Activated B cell treated with CpG ODN at 0.5 μM for 24 hours (primary cell): ENCODE measurements at regions of chr17 and their contacts with region 1.

Region 1: DNA sequence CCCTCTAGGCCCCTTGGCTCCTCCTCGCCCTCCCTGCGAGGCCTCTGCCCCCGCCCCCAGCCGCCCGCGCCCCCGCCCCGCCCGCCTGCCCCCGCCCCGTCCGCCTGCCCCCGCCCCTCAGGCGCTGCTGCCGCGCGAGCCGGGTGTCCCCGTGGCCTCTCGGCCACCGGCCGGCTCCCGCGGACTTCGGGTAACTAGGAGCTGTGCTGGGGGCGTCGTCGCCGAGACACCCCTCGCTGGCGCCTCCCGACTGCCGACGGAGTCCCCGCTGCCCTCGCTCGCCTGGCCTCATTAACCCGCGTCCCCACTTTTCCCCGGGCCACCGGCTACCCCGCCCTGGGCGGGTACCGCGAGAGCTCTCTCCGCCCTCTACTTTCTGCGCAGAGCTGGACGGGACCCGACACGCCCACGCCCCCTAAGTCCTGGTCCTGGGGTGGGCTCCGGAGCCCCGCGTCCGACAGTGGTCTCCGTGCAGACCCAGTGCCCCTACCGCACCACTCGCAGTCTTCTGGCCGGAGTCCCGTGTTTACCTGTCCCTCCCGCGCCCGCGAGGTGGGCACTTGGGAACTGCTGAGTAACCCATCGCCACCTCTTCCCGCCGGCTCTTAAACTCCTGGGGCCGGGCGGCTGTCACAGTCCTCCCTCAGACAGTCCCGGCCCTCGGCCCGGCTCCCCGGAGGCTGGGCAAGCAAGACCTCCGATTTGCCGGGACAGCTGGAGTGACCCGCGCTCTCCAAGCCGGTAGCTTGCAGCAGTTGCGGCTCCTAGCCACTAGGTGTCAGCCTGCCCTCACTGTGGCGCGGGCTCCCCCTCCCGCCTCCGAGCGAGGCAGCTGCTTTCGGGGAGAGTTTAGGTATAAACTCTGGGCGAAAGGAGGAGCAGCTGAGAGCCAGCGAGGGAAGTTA is at the start of gene TLCD1:
- DNase-seq: peak; percentile 87
- ATAC-seq: peak; percentile 40
- H3K4me3 Mint-ChIP-seq: peak within 1 kb of the TSS; percentile 95
- H3K27ac Mint-ChIP-seq: peak within 1 kb of the TSS; percentile 99
- H3K4me1 Mint-ChIP-seq: peaks cover 70% of the 10 kb centered on the region
- H3K27me3 Mint-ChIP-seq: no peaks in the 10 kb centered on the region
- CTCF ChIP-seq: peak; percentile 78
- total RNA-seq, gene TLCD1: 40.7 and 41.0 TPM in 2 replicates

Region 2: GRCh38 chr17:28405632-28406472 is 320.6 kb before region 1 on chr17 and contains the start of gene SLC46A1:
- CTCF ChIA-PET with region 1: no interaction called
- POLR2A ChIA-PET with region 1: no interaction called
- intact Hi-C with region 1: no loop called
- DNase-seq: peak; percentile 52
- ATAC-seq: peak; percentile 88
- H3K4me3 Mint-ChIP-seq: peak within 1 kb of the TSS; percentile 83
- H3K27ac Mint-ChIP-seq: peak within 1 kb of the TSS; percentile 41
- H3K4me1 Mint-ChIP-seq: peaks cover 8% of the 10 kb centered on the region
- H3K27me3 Mint-ChIP-seq: peaks cover 4% of the 10 kb centered on the region
- CTCF ChIP-seq: no peak
- total RNA-seq, gene SLC46A1: 1.5 and 2.1 TPM in 2 replicates

Region 3: DNA sequence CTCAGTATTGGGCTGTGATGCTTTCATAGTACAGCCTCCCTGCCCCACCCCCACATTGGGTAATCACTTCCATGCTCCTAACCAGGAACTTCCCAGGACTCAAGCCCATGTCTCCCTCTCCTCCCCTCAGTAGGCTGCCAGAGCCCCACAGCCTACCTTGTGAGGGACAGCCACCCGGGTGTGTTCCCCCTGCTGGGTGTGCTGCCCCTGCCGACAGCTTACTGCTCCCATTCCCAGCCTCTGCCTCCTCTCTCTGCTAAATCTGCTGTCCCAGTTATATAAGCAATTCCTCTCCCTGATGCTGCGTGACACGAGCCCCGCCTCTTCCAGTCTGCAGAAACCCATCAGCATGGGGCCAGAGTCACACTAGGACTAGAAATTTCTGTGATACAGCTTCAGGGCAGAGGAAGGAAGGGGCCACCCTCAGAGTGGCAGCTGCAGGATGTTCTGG is 112.5 kb before region 1 on chr17 and contains the start of gene RSKR:
- CTCF ChIA-PET with region 1: no interaction called
- POLR2A ChIA-PET with region 1: no interaction called
- intact Hi-C with region 1: no loop called
- DNase-seq: no peak
- ATAC-seq: no peak
- H3K4me3 Mint-ChIP-seq: no peak within 1 kb of the TSS
- H3K27ac Mint-ChIP-seq: peak within 1 kb of the TSS; percentile 56
- H3K4me1 Mint-ChIP-seq: peaks cover 38% of the 10 kb centered on the region
- H3K27me3 Mint-ChIP-seq: no peaks in the 10 kb centered on the region
- CTCF ChIP-seq: no peak
- total RNA-seq, gene RSKR: 21.0 and 26.8 TPM in 2 replicates

Region 4: GRCh38 chr17:28644985-28645939 is 81.2 kb before region 1 on chr17 and contains the start of gene BLTP2:
- CTCF ChIA-PET with region 1: interaction called, 12 read pairs
- POLR2A ChIA-PET with region 1: interaction called, 50 read pairs
- intact Hi-C with region 1: no loop called
- DNase-seq: peak; percentile 91
- ATAC-seq: peak; percentile 97
- H3K4me3 Mint-ChIP-seq: peak within 1 kb of the TSS; percentile 97
- H3K27ac Mint-ChIP-seq: peak within 1 kb of the TSS; percentile 91
- H3K4me1 Mint-ChIP-seq: peaks cover 40% of the 10 kb centered on the region
- H3K27me3 Mint-ChIP-seq: no peaks in the 10 kb centered on the region
- CTCF ChIP-seq: no peak
- total RNA-seq, gene BLTP2: 162 and 182 TPM in 2 replicates

Region 5: DNA sequence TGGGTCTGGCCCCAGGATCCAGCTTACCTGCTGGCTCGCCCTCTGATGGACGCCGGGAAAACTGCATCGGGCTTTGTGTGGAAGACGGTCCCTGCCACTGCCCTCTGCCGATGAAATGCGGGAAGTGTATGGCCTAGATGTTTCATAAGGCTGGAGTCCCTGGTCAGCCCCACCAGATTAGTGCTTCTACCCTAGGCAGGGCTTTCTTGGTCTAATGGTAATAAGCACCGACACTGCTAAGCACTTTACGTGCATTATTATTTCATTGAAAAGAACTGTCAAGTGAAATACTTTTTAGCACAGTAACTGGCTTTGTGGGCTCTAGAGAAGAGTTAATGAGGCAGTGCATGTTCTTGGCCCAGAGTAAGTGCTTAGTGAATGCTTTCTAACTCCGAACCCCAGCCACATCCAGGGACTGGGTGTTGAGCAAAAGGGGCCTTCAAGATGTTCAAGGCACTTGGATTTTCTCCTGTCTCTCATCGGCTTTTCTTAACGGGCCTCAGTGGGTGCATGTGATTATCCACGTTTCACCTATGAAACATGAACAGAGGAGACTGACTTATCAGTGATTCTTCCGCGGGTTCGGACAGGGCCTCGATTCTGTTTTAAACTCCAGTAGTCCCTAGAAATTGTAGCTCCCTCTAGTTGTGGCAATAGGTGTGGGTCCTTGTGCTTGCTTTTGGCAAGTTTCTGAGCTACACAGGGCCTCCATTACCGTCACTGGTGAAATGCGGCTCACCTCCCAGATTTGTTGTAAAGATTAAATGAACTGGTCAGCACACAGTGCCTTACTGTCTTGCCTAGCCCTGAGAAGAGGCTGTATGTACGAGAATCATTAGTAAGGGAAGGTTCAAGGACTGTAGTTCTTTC is 23.9 kb after region 1 on chr17:
- CTCF ChIA-PET with region 1: interaction called, 545 read pairs
- POLR2A ChIA-PET with region 1: interaction called, 2,384 read pairs
- intact Hi-C with region 1: loop called (anchors 1 kb)
- DNase-seq: peak; percentile 82
- ATAC-seq: peak; percentile 84
- H3K4me3 Mint-ChIP-seq: peak overlapping the region; percentile 75
- H3K27ac Mint-ChIP-seq: peak overlapping the region; percentile 74
- H3K4me1 Mint-ChIP-seq: peaks cover 51% of the 10 kb centered on the region
- H3K27me3 Mint-ChIP-seq: no peaks in the 10 kb centered on the region
- CTCF ChIP-seq: peak; percentile 95

Region 6: GRCh38 chr17:28812091-28812747 is 85.7 kb after region 1 on chr17:
- CTCF ChIA-PET with region 1: interaction called, 7 read pairs
- POLR2A ChIA-PET with region 1: no interaction called
- intact Hi-C with region 1: loop called (anchors 1 kb)
- DNase-seq: peak; percentile 89
- ATAC-seq: peak; percentile 100
- H3K4me3 Mint-ChIP-seq: peak overlapping the region; percentile 87
- H3K27ac Mint-ChIP-seq: peak overlapping the region; percentile 83
- H3K4me1 Mint-ChIP-seq: peaks cover 31% of the 10 kb centered on the region
- H3K27me3 Mint-ChIP-seq: no peaks in the 10 kb centered on the region
- CTCF ChIP-seq: no peak

Region 7: GRCh38 chr17:28878981-28879380 is 152.5 kb after region 1 on chr17:
- CTCF ChIA-PET with region 1: interaction called, 11 read pairs
- POLR2A ChIA-PET with region 1: interaction called, 3 read pairs
- intact Hi-C with region 1: no loop called
- DNase-seq: no peak
- ATAC-seq: peak; percentile 64
- H3K4me3 Mint-ChIP-seq: no peak overlapping the region
- H3K27ac Mint-ChIP-seq: no peak overlapping the region
- H3K4me1 Mint-ChIP-seq: peaks cover 8% of the 10 kb centered on the region
- H3K27me3 Mint-ChIP-seq: no peaks in the 10 kb centered on the region
- CTCF ChIP-seq: no peak

Region 8: DNA sequence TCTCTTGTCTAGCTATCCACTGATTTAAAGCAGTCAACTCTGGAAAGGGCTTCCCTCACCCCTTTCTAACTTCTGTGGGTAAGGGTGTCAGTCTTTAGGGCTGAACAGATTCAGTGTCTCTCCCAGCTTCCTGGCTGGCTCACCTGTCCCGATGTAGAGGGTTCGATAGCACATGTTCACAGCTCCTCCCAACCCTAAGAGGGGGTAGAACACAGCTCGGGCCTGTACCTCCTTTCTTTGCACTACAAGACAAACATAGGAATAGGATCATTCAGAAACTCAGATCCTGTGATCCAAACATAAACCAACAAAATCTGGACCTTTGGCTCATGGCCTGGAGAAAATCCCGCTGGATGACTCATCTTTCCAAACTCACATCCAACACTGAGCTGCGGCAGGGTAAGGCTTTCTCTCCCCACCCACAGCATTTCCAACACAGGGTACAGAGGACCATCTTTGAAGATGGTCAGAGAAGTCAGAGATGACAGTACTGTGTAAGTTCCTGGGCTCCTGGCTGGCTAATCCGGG is 182.2 kb after region 1 on chr17:
- CTCF ChIA-PET with region 1: interaction called, 10 read pairs
- POLR2A ChIA-PET with region 1: interaction called, 52 read pairs
- intact Hi-C with region 1: loop called (anchors 1 kb)
- DNase-seq: no peak
- ATAC-seq: no peak
- H3K4me3 Mint-ChIP-seq: no peak overlapping the region
- H3K27ac Mint-ChIP-seq: no peak overlapping the region
- H3K4me1 Mint-ChIP-seq: no peaks in the 10 kb centered on the region
- H3K27me3 Mint-ChIP-seq: no peaks in the 10 kb centered on the region
- CTCF ChIP-seq: no peak

Region 9: GRCh38 chr17:29568331-29569244 is 842.1 kb after region 1 on chr17 and contains the start of gene TP53I13:
- CTCF ChIA-PET with region 1: no interaction called
- POLR2A ChIA-PET with region 1: no interaction called
- intact Hi-C with region 1: loop called (anchors 5 kb)
- DNase-seq: peak; percentile 83
- ATAC-seq: peak; percentile 65
- H3K4me3 Mint-ChIP-seq: peak within 1 kb of the TSS; percentile 97
- H3K27ac Mint-ChIP-seq: peak within 1 kb of the TSS; percentile 97
- H3K4me1 Mint-ChIP-seq: peaks cover 32% of the 10 kb centered on the region
- H3K27me3 Mint-ChIP-seq: no peaks in the 10 kb centered on the region
- CTCF ChIP-seq: no peak
- total RNA-seq, gene TP53I13: 65.1 and 71.2 TPM in 2 replicates